Heart right ventricle (tissue), 16 donors: ENCODE measurements at regions of chr14 and their contacts with region 1.

Region 1: DNA sequence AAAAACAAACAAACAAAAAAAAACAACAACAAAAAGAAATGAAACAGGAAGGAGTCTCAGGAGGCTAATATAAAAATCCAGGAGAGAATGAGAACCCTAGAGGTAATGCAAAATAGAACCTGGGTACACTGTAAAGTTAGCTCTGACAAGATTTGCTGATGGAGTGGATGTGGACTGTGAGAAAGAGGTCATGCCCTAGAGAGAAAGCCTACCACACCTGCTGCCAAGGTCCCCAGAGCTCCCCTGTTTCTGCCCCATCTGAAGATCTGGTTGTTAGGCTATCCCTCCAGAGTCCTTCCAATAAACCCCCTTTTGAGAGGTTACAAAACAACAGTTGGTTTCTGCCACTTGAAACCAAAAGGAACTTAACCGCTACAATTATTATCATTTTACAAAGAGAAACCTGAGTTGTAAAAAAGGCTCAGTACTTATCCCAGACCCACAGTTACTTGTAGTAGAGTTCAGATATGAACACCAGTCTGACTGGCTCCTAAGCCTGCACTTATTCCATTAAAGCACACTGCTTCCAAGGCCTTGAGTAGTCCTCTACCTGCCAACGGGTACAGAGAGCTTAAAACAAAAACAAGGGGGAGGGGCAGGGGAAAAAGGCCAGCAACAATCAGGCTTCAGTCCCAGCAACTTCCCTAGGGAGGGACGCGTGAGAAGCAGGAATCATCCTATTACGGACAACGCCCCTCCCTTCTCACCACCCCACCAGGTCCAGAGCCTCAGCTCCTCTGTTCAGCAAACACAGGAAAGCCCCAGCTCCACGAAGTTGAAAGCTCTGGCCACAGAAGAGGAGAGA is 27.7 kb downstream of the PPP1R13B start:
- DNase-seq: peak; percentile 36 to 79
- ATAC-seq: peak; percentile 66 to 91 (median 84)
- H3K4me3 ChIP-seq: peak overlapping the region in 6 of 10 donors; percentile 3 to 15 (median 8)
- H3K27ac ChIP-seq: peak overlapping the region; percentile 12 to 85 (median 73)
- H3K4me1 ChIP-seq: peaks cover 12 to 79% (median 59%) of the 10 kb centered on the region in 9 donors
- H3K27me3 ChIP-seq: peaks cover 0 to 13% (median 0%) of the 10 kb centered on the region in 7 donors
- CTCF ChIP-seq: no peak

Region 2: DNA sequence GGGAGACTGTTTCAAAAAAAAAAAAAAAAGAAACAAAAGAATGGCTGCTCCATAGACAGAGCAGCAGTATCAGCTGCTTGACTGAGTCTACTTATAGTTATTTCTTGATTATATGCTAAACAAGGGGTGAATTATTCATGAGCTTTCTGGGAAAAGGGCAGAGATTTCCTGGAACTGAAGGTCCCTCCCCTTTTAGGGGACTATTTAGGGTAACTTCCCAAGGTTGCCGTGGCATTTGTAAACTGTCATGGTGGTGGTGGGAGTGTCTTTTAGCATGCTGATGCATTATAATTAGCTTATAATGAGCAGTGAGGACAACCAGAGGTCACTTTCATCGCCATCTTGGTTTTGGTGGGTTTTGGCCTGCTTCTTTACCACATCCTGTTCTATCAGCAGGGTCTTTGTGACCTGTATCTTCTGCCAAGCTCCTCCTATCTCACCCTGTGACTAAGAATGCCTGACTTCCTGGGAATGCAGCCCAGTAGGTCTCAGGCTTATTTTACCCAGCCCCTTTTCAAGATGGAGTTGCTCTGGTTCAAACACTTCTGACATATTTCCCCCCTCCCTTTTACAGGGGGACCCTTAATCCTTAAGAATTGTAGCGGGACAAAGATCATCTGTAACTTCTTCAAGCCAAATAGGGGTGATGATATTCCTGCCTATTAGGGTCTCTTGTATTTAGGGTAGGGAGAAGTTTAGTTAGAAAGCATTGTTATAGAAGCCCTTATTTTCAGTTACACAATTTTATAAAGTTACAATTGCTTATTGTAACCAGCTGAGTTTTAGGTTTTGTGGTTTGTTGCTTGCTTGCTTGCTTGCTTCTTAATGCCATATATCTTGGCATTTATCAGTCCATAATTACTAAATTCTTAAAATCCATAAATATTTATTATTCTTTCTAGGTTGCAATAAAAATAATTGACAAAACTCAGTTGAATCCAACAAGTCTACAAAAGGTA is 391.9 kb before region 1 on chr14:
- intact Hi-C with region 1: no loop called
- DNase-seq: peak in 1 of 2 donors; percentile 40
- ATAC-seq: peak in 6 of 8 donors; percentile 26 to 70 (median 61)
- H3K4me3 ChIP-seq: no peak overlapping the region
- H3K27ac ChIP-seq: peak overlapping the region in 8 of 10 donors; percentile 1 to 82 (median 35)
- H3K4me1 ChIP-seq: peaks cover 0 to 63% (median 37%) of the 10 kb centered on the region in 9 donors
- H3K27me3 ChIP-seq: no peaks in the 10 kb centered on the region
- CTCF ChIP-seq: no peak

Region 3: GRCh38 chr14:103581936-103582703 is 237.6 kb before region 1 on chr14:
- intact Hi-C with region 1: no loop called
- DNase-seq: no peak
- ATAC-seq: peak in 4 of 8 donors; percentile 16 to 33 (median 18)
- H3K4me3 ChIP-seq: no peak overlapping the region
- H3K27ac ChIP-seq: no peak overlapping the region
- H3K4me1 ChIP-seq: peaks cover 0 to 4% (median 2%) of the 10 kb centered on the region in 9 donors
- H3K27me3 ChIP-seq: no peaks in the 10 kb centered on the region
- CTCF ChIP-seq: no peak

Region 4: GRCh38 chr14:104993808-104994591 is 1174.3 kb after region 1 on chr14:
- intact Hi-C with region 1: loop called in 1 of 10 experiments (anchors 10 kb)
- DNase-seq: no peak
- ATAC-seq: no peak
- H3K4me3 ChIP-seq: no peak overlapping the region
- H3K27ac ChIP-seq: no peak overlapping the region
- H3K4me1 ChIP-seq: no peaks in the 10 kb centered on the region
- H3K27me3 ChIP-seq: no peaks in the 10 kb centered on the region
- CTCF ChIP-seq: no peak